Dorsolateral prefrontal cortex (tissue), 120 donors: ENCODE measurements at regions of chr3 and their contacts with region 1.

Region 1: DNA sequence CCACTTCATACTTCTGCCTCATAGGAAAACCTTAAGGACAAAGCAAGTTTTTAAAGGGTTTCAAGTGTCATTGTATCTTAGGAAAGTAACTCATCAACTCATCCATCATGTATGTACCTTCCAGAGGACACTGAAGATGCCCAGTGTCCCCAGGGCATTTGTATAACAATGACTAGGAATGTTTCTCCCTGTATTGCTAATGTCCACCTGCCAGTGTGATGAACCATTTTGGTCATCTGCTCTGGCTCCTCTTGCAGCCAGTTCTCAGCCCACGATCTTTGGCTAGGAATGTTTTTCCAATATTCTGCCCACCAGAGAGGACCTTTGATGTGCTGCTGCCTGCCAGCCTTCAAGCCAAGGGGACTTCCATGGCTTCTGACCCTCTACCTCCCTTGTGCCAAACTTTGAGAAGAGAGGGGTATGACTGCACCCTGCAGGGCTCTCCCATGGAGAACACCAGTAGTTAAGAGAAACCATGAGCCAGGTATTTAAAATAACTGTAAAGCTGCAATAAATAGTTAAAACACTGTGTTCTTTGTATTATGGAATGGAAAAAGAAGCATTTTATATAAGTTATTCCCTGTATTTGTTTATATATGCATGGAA is 11.4 kb downstream of the LMOD3 start:
- DNase-seq: no peak
- H3K4me3 ChIP-seq: no peak overlapping the region
- H3K27ac ChIP-seq: peak overlapping the region in 15 of 59 donors; percentile 4 to 97 (median 21)
- H3K27me3 ChIP-seq: no peaks in the 10 kb centered on the region
- CTCF ChIP-seq: no peak

Region 2: DNA sequence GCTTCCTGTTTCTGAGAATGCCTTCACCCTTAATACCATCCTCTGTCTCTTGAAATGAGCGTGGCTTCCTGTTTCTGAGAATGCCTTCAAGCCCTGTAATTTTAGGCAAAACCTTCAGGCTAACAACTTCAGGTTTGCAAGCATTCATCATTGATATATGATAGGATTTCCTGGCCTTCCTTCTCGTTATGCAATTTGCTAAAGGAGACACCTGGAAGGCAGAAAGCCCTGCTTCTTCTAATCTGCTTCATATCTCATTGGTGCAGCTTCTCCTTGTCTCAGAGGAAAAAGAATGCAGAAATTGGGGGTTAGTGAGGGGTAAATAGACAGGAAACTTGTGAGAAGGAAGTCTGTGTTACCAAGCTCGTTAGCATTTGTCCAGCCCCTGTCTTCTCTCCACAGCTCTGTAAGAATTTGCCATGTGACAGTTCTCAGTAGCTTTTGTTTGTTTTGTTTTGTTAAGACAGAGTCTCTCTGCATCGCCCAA is 19.0 kb before region 1 on chr3:
- intact Hi-C with region 1: loop called in 1 of 2 experiments (anchors 2 kb)
- DNase-seq: no peak
- H3K4me3 ChIP-seq: peak overlapping the region in 41 of 59 donors; percentile 1 to 80 (median 18)
- H3K27ac ChIP-seq: peak overlapping the region; percentile 38 to 99 (median 90)
- H3K27me3 ChIP-seq: no peaks in the 10 kb centered on the region
- CTCF ChIP-seq: peak in 1 of 56 donors; percentile 5